Dendritic cell treated with granulocyte-macrophage colony-stimulating factor and Interleukin-4, amounts not matched to agents 40 ng/mL and 50 ng/mL, for 4 days (primary cell): ENCODE measurements at regions of chr14 and their contacts with region 1.

Region 1: DNA sequence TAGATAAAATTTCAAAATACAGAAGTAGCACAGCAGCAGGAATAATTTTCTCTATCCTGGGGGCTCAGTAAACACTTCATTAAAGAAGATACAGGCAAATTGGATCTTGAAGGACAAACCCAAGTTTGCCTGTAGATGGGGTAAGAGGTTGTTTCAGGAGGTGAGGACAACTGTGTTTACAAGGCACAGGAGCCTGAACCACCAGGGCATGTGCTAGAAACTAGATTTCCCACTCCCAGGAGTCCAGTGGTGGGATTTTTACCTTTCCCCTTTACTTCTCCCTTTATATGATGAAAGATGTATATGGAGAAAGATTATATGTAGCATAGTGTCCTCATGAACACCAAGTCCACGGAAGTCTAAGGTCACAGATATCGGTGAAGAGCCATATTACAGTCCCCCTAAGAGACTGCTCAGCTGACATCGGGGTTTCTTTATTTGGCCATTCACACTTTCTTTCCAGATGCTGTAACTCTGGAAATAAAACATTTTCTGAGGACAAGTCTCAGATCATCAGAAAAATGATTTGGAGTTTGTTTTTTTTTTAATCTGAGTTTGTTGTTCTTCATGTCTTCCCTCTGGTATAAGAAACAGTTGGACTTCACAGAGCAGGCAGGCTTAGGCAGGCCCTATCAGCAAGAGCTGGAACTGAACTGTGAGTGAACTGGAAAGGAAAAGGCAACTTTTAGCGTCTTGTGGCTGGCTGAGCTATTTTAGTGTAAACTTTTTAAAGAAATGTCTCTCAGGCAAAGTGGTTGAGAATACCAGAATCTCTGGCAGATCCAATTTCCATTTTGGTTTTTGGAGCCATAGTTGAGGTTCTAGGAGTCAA is 8.0 kb upstream of the EVL start:
- H3K4me3 Mint-ChIP-seq: no peak overlapping the region
- H3K27ac Mint-ChIP-seq: no peak overlapping the region
- H3K4me1 Mint-ChIP-seq: peaks cover 26% of the 10 kb centered on the region
- H3K27me3 Mint-ChIP-seq: no peaks in the 10 kb centered on the region

Region 2: GRCh38 chr14:100108042-100108825 is 51.1 kb after region 1 on chr14:
- intact Hi-C with region 1: loop called (anchors 2 kb)
- H3K4me3 Mint-ChIP-seq: no peak overlapping the region
- H3K27ac Mint-ChIP-seq: peak overlapping the region; percentile 43
- H3K4me1 Mint-ChIP-seq: peaks cover 73% of the 10 kb centered on the region
- H3K27me3 Mint-ChIP-seq: no peaks in the 10 kb centered on the region